Natural killer cell (primary cell): ENCODE measurements at regions of chr15 and their contacts with region 1.

Region 1: DNA sequence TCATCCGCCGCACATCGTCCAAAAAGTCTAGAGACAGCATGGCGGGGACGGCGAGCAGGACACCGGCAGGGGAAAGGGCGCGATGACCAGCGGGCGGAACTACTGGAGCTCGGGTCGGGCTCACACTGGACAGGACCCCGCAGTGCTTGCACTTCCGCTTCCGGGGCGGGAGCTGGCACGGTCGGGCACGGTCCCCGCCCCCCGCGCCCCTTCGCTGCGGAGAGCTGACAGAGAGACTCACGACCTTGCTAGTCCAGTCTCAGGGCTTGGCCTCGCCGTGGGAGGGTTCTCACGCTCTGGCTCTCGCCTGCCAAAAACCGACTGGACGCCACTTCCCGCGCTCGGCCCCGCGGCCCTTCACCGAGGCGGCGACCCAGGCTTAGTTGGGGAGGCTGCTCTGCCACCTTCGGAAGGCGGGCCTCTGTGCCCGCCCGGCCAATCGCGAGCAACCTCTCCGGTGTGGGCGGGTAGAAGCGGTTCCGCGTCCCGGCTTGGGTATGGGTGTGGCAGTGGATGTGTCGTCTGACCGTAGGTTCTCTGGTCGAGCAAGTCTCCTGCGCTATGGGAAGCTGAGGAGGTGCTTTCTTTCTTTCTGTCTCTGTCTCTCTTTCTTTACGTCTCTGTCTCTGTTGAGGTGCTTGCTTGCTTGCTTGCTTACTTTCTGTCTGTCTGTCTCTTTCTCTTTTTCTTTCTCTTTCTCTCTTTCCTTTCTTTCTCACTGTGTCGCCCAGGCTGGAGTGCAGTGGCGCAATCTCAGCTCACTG is at the start of gene SEC11A:
- DNase-seq: peak; percentile 93
- ATAC-seq: peak; percentile 94 to 98 (median 95)
- H3K4me3 ChIP-seq: peak within 1 kb of the TSS; percentile 96
- H3K4me3 Mint-ChIP-seq: peak within 1 kb of the TSS; percentile 96
- H3K27ac ChIP-seq: peak within 1 kb of the TSS; percentile 91
- H3K27ac Mint-ChIP-seq: peak within 1 kb of the TSS; percentile 92 to 97
- H3K4me1 ChIP-seq: peaks cover 15% of the 10 kb centered on the region
- H3K4me1 Mint-ChIP-seq: peaks cover 34 to 44% of the 10 kb centered on the region in 2 donors
- H3K27me3 ChIP-seq: no peaks in the 10 kb centered on the region
- H3K27me3 Mint-ChIP-seq: no peaks in the 10 kb centered on the region
- CTCF ChIP-seq: no peak
- total RNA-seq, gene SEC11A: 78.7 to 89.3 (median 81.8) TPM

Region 2: DNA sequence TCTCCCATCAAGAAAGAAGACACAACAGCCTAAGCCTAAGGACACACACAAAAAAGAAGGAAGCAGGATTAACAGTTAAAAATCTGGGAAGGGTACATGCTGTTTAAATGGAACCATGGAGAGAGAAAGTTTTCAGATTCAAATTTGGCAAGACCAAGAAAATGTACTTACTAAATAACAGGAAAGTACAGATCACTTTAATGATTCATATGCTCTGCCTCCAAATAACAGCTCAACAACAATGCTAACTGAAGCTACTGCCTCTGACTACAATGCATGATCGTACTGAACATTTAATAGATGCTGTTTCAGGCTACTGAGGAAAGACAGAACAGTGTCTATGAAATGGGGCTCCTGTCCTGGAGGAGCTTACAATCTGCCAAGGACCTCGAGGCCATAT is 49.8 kb before region 1 on chr15:
- intact Hi-C with region 1: no loop called
- DNase-seq: no peak
- ATAC-seq: no peak
- H3K4me3 ChIP-seq: no peak overlapping the region
- H3K4me3 Mint-ChIP-seq: no peak overlapping the region
- H3K27ac ChIP-seq: no peak overlapping the region
- H3K27ac Mint-ChIP-seq: peak overlapping the region in 1 of 2 donors; percentile 1
- H3K4me1 ChIP-seq: no peaks in the 10 kb centered on the region
- H3K4me1 Mint-ChIP-seq: no peaks in the 10 kb centered on the region
- H3K27me3 ChIP-seq: no peaks in the 10 kb centered on the region
- H3K27me3 Mint-ChIP-seq: no peaks in the 10 kb centered on the region
- CTCF ChIP-seq: no peak

Region 3: GRCh38 chr15:84697236-84697990 is 18.8 kb before region 1 on chr15:
- intact Hi-C with region 1: no loop called
- DNase-seq: no peak
- ATAC-seq: no peak
- H3K4me3 ChIP-seq: no peak overlapping the region
- H3K4me3 Mint-ChIP-seq: no peak overlapping the region
- H3K27ac ChIP-seq: no peak overlapping the region
- H3K27ac Mint-ChIP-seq: peak overlapping the region; percentile 23 to 76
- H3K4me1 ChIP-seq: no peaks in the 10 kb centered on the region
- H3K4me1 Mint-ChIP-seq: peaks cover 27 to 35% of the 10 kb centered on the region in 2 donors
- H3K27me3 ChIP-seq: no peaks in the 10 kb centered on the region
- H3K27me3 Mint-ChIP-seq: no peaks in the 10 kb centered on the region
- CTCF ChIP-seq: no peak

Region 4: GRCh38 chr15:84734794-84735479 is 18.7 kb after region 1 on chr15:
- intact Hi-C with region 1: loop called (anchors 1 kb)
- DNase-seq: peak; percentile 40 to 86
- ATAC-seq: peak; percentile 66 to 75 (median 71)
- H3K4me3 ChIP-seq: peak overlapping the region; percentile 18
- H3K4me3 Mint-ChIP-seq: peak overlapping the region; percentile 88
- H3K27ac ChIP-seq: peak overlapping the region; percentile 50
- H3K27ac Mint-ChIP-seq: peak overlapping the region; percentile 83 to 96
- H3K4me1 ChIP-seq: peaks cover 37% of the 10 kb centered on the region
- H3K4me1 Mint-ChIP-seq: peaks cover 38 to 40% of the 10 kb centered on the region in 2 donors
- H3K27me3 ChIP-seq: no peaks in the 10 kb centered on the region
- H3K27me3 Mint-ChIP-seq: no peaks in the 10 kb centered on the region
- CTCF ChIP-seq: no peak

Region 5: DNA sequence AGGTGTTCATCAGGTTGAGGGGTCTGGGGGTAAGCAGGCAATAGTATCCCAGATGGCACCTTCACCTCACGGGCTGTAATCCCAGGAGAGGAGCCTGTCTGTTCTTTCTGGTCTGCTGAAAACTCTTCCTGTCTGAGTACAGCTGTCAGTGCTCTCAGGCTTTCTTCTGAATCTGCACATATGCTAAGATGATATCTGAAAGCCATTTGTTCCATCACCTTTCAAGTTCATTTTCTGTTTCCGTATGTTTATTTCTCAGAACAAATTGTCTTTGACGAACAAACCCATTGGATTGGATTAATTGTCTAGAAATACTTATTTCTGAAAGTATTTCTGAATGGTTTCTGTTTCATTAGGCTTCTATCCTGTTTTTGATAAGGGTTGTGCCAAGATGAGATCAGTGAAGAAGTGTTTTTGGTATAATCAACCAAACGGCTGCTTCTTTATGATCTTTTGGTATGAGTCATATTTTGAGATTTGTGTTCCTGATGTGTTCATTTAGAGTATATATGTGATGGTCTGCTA is 45.5 kb after region 1 on chr15:
- intact Hi-C with region 1: no loop called
- DNase-seq: peak in 1 of 2 donors; percentile 37
- ATAC-seq: peak in 1 of 3 donors; percentile 60
- H3K4me3 ChIP-seq: no peak overlapping the region
- H3K4me3 Mint-ChIP-seq: no peak overlapping the region
- H3K27ac ChIP-seq: peak overlapping the region; percentile 5
- H3K27ac Mint-ChIP-seq: no peak overlapping the region
- H3K4me1 ChIP-seq: peaks cover 23% of the 10 kb centered on the region
- H3K4me1 Mint-ChIP-seq: peaks cover 11 to 25% of the 10 kb centered on the region in 2 donors
- H3K27me3 ChIP-seq: no peaks in the 10 kb centered on the region
- H3K27me3 Mint-ChIP-seq: no peaks in the 10 kb centered on the region
- CTCF ChIP-seq: no peak